GM18951 (cell line): ENCODE measurements at regions of chr10 and their contacts with region 1.

Region 1: DNA sequence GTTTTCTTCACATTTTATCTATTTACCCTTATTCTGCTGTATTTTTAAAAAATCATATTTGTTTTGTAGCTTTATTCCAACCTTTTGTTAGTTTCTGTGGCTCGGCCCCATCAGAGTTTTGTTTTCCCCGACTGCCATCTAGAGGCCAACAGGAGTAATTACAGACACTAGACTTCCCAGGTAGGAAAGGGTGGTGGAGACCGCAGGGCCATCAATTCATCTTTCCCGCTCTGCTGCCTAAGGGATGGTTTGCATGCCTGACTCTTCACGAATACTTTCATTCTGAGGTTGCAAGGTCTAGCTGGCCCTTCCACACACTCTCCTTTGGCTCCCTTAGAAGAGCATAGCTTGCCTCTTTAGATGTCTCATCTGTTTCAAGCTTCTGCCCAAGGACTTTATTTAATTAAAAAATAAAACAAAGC is 38.3 kb downstream of the LYZL2 start:
- POLR2A ChIP-seq: no peak

Region 2: DNA sequence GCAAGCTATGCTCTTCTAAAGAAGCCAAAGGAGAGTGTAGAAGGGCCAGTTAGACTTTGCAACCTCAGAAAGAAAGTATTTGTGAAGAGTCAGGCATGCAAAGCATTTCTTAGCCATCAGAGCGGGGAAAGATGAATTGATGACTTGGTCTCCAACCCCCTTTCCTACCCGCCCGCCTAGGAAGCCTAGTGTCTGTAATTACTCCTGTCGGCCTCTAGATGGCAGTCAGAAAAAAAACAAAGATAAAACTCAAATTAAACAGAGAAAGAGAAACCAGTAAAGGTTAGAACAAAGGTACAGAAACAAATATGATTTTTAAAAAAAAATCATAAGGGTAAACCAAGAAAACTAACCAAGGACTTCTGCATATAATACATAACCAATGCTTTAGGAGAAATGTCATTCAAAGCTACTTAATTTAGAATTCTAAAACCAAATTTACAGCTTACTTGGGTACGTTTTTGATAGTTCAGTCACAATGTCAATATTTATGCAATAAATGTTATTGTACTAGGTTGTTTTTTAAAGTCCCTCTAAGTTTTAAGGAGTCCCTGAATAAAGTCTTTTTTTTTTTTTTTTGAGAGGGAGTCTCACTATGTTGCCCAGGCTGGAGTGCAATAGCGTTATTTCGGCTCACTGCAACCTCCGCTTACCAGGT is 1204.8 kb before region 1 on chr10:
- in situ Hi-C with region 1: loop called (anchors 10 kb)
- POLR2A ChIP-seq: no peak

Region 3: GRCh38 chr10:30392564-30392990 is 198.7 kb before region 1 on chr10:
- in situ Hi-C with region 1: loop called (anchors 5 kb)
- POLR2A ChIP-seq: no peak